ENCODE measurements at regions of chr5 and their contacts with region 1.

Region 1: GRCh38 chr5:75681125-75681830 is 36.0 kb downstream of the POC5 start:
- DNase-seq: no peak
- ATAC-seq: no peak
- H3K4me3 ChIP-seq: peak overlapping the region in 2 of 12 donors; percentile 24 to 25
- H3K27ac ChIP-seq: no peak overlapping the region
- H3K4me1 ChIP-seq: peaks cover 0 to 6% (median 0%) of the 10 kb centered on the region in 12 donors
- H3K27me3 ChIP-seq: no peaks in the 10 kb centered on the region
- CTCF ChIP-seq: peak; percentile 65 to 85 (median 76)
- POLR2A ChIP-seq: no peak

Region 2: GRCh38 chr5:75236322-75237316 is 444.7 kb before region 1 on chr5 and contains the start of gene ANKRD31:
- intact Hi-C with region 1: loop called in 8 of 10 experiments (anchors 2 to 10 kb)
- DNase-seq: peak; percentile 84 to 94 (median 90)
- ATAC-seq: peak; percentile 97 to 100 (median 100)
- H3K4me3 ChIP-seq: peak within 1 kb of the TSS; percentile 50 to 75 (median 68)
- H3K27ac ChIP-seq: peak within 1 kb of the TSS in 10 of 12 donors; percentile 15 to 77 (median 58)
- H3K4me1 ChIP-seq: peaks cover 0 to 12% (median 5%) of the 10 kb centered on the region in 12 donors
- H3K27me3 ChIP-seq: no peaks in the 10 kb centered on the region
- CTCF ChIP-seq: peak; percentile 71 to 97 (median 90)
- POLR2A ChIP-seq: peak in 1 of 2 donors; percentile 58
- total RNA-seq, gene ANKRD31: 0.05 to 0.17 (median 0.11) TPM in 5 of 9 donors, not detected in the others

Region 3: DNA sequence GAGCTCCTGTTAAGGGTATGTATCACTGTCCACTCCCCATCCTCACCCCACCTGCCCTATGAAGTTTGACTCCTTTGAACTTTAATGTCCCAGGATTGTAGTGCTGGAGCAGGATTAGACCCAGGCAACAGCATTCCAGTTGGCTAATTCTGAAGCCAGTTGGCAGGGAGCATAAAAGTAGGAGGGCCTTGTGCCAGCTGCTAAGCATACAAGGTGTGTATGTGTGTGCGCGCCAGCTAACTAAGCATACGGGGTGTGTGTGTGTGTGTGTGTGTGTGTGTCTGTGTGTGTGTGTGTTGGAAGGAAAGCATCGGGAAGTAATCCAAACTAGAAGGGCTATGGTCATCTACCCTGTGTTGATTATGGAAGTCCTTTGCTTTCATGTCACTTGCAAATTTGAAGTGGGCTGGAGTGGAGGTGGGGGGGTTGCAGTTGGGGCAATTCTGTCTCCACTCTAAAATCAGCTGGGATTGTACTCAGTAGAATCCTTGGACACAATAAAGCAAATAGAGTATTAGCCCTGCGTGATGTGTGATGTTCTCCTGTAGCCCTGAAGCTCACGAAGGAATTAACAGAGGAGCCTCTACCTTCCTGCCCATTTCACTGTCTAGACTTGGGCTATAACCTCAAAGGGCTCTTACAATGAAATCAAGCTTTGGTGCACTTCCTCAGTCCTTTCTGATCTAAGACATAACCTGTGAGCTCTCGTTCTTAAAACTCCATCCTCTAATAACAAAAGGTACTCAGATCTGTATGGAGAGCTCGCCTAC is 317.4 kb before region 1 on chr5:
- intact Hi-C with region 1: loop called in 1 of 10 experiments (anchors 10 kb)
- DNase-seq: peak; percentile 32 to 66 (median 58)
- ATAC-seq: peak; percentile 74 to 92 (median 88)
- H3K4me3 ChIP-seq: no peak overlapping the region
- H3K27ac ChIP-seq: no peak overlapping the region
- H3K4me1 ChIP-seq: peaks cover 0 to 8% (median 0%) of the 10 kb centered on the region in 12 donors
- H3K27me3 ChIP-seq: no peaks in the 10 kb centered on the region
- CTCF ChIP-seq: no peak
- POLR2A ChIP-seq: no peak

Region 4: GRCh38 chr5:75511435-75512384 is 169.6 kb before region 1 on chr5 and contains the starts of genes CERT1 and POLK:
- intact Hi-C with region 1: loop called in 3 of 10 experiments (anchors 5 to 10 kb)
- DNase-seq: peak; percentile 98 to 99 (median 99)
- ATAC-seq: peak; percentile 98 to 99 (median 99)
- H3K4me3 ChIP-seq: peak within 1 kb of the TSS; percentile 71 to 97 (median 84)
- H3K27ac ChIP-seq: peak within 1 kb of the TSS; percentile 76 to 94 (median 92)
- H3K4me1 ChIP-seq: peaks cover 4 to 59% (median 38%) of the 10 kb centered on the region in 12 donors
- H3K27me3 ChIP-seq: no peaks in the 10 kb centered on the region
- CTCF ChIP-seq: no peak
- POLR2A ChIP-seq: peak in 1 of 2 donors; percentile 87
- total RNA-seq, gene CERT1: 16.5 to 57.6 (median 36.2) TPM
- total RNA-seq, gene POLK: 16.8 to 28.8 (median 24.2) TPM

Region 5: GRCh38 chr5:75603371-75603770 is 77.9 kb before region 1 on chr5:
- intact Hi-C with region 1: loop called in 1 of 10 experiments (anchors 10 kb)
- DNase-seq: no peak
- ATAC-seq: no peak
- H3K4me3 ChIP-seq: no peak overlapping the region
- H3K27ac ChIP-seq: no peak overlapping the region
- H3K4me1 ChIP-seq: peaks cover 0 to 13% (median 3%) of the 10 kb centered on the region in 12 donors
- H3K27me3 ChIP-seq: no peaks in the 10 kb centered on the region
- CTCF ChIP-seq: no peak
- POLR2A ChIP-seq: no peak

Measured in heart left ventricle (tissue), 16 donors.